ENCODE measurements at regions of chr2 and their contacts with region 1.

Region 1: DNA sequence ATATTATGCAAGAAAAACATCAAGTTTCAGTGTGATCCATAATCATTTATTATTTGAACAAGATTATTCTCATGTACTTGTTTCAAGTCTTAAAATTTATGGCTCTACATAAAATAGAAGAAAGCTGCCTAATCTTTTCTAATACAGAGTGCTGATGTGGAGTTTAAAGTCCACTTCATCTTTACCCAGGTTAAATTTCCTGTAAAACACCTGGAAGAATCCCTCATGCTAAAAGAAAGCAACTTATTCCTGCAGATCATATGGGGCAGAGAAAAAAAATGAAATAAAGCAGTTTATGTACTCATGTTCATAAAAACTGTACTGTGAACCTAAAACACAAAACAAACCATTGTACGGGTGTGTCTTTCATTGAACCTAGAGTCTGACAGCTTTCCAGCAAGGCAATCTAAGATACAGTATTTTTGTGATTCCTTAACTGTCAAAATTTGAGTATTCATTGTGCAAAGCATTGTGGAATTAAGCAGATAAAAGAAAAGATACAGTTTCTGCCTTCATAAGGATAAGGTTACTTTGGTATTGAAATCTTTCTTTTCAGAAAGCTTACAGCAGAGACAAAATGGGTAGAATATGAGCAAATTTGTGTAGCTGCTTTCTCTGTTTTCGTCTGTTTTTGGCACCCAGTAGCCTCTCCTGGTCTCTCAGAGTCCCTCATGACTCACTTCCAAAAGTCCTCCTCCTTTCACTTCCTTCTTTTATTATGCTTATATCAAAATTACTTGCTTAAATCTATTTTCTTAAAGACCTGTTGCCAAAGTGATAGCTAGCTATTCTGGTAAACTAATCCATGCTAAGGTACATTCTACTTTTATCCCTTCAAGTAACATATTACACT is 26.9 kb upstream of the GLS start:
- DNase-seq: no peak
- ATAC-seq: no peak

Region 2: GRCh38 chr2:190618030-190618429 is 235.7 kb before region 1 on chr2:
- intact Hi-C with region 1: no loop called
- DNase-seq: no peak
- ATAC-seq: no peak

Region 3: DNA sequence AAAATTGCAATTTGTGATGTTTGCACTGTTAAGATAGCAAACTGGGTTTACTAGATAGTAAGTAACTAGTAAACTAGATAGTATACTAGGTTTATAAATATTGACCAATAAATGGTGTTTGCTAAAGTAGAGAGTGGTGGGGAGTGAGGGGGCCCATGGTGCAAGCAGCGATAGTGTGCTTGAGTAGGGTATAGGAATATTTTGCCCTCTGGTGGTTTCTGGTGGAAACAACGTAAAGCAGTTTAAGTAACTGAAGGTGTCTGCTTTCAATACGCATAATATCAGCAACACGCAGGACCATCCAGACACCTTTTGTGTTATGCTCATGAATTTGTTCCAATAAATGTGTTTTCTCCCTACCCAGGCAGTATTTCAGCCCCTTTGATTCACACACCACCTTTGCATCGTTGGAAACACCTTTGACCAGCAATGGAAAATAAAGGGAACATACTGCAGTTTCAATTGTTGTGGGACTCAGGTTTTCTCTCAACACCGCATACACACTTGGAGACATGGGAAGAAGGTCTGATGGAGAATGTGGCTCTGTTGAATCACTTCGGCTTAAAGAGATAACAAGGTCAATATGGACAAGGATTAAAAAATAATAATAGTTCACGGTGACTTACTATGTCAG is 176.9 kb after region 1 on chr2:
- intact Hi-C with region 1: loop called (anchors 2 kb)
- DNase-seq: no peak
- ATAC-seq: no peak